Heart left ventricle (tissue), 16 donors: ENCODE measurements at regions of chr4 and their contacts with region 1.

Region 1: DNA sequence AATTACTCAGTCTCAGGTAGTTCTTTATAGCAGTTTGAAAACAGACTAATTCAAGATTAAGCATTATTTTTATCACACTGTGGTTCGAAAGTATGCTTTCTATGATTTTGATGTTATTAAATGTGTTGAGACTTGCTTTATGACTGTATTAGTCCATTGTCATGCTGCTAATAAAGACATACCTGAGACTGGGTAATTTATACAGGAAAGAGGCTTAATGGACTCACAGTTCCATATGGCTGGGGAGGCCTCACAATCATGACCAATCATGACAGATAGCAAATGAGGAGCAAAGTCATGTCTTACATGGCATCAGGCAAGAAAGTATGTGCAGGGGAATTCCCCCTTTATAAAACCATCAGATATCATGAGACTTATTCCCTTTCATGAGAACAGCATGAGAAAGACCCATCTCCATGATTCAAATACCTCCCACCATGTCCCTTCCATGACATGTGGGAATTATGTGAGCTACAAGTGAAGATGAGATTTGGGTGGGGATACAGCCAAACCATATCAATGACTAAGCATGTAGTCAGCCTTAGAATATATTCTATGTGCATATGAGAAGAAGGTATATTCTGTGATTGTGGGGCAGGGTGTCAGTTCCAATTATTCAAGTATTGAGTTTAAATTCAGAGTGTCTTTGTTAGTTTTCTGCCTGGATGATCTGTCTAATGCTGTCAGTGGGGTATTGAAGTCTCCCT is 44.6 kb upstream of the UGT2A1 start:
- DNase-seq: no peak
- ATAC-seq: no peak
- H3K4me3 ChIP-seq: no peak overlapping the region
- H3K27ac ChIP-seq: no peak overlapping the region
- H3K4me1 ChIP-seq: no peaks in the 10 kb centered on the region
- H3K27me3 ChIP-seq: no peaks in the 10 kb centered on the region
- CTCF ChIP-seq: no peak
- POLR2A ChIP-seq: no peak

Region 2: GRCh38 chr4:69881173-69881773 is 183.6 kb after region 1 on chr4:
- intact Hi-C with region 1: loop called in 6 of 10 experiments (anchors 5 to 10 kb)
- DNase-seq: no peak
- ATAC-seq: peak; percentile 46 to 68 (median 59)
- H3K4me3 ChIP-seq: no peak overlapping the region
- H3K27ac ChIP-seq: no peak overlapping the region
- H3K4me1 ChIP-seq: no peaks in the 10 kb centered on the region
- H3K27me3 ChIP-seq: no peaks in the 10 kb centered on the region
- CTCF ChIP-seq: peak; percentile 25 to 70 (median 48)
- POLR2A ChIP-seq: no peak

Region 3: GRCh38 chr4:70496231-70496630 is 798.5 kb after region 1 on chr4:
- intact Hi-C with region 1: loop called in 2 of 10 experiments (anchors 10 kb)
- DNase-seq: no peak
- ATAC-seq: no peak
- H3K4me3 ChIP-seq: no peak overlapping the region
- H3K27ac ChIP-seq: no peak overlapping the region
- H3K4me1 ChIP-seq: no peaks in the 10 kb centered on the region
- H3K27me3 ChIP-seq: no peaks in the 10 kb centered on the region
- CTCF ChIP-seq: no peak
- POLR2A ChIP-seq: no peak

Region 4: GRCh38 chr4:70505151-70505748 is 807.6 kb after region 1 on chr4:
- intact Hi-C with region 1: loop called in 2 of 10 experiments (anchors 5 to 10 kb)
- DNase-seq: peak in 3 of 5 donors; percentile 16 to 60 (median 25)
- ATAC-seq: no peak
- H3K4me3 ChIP-seq: no peak overlapping the region
- H3K27ac ChIP-seq: no peak overlapping the region
- H3K4me1 ChIP-seq: no peaks in the 10 kb centered on the region
- H3K27me3 ChIP-seq: peaks cover 0 to 2% (median 0%) of the 10 kb centered on the region in 9 donors
- CTCF ChIP-seq: peak; percentile 49 to 86 (median 70)
- POLR2A ChIP-seq: no peak